Adrenal gland (tissue), 19 donors: ENCODE measurements at regions of chr17 and their contacts with region 1.

Region 1: DNA sequence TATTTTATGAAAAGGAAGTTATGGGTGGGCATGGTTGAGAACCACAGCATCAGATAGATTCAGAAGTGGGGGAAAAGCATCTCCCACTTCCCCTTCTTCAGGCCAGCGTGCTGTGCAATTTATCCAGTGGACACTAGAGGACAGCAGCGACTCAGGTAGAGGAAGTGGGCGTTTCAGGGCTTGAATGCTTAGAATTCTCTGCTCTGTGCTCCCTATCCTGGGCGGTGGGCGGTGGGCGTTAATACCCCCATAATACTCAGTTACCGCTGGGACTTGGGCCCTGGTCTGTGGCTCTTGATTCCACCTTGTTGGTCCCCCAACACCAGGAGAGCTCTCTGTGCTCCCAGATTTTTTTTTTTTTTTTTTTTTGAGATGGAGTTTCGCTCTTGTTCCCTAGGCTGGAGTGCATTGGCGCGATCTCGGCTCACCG is 3.7 kb upstream of the LYZL6 start:
- DNase-seq: peak; percentile 33 to 67 (median 46)
- H3K4me3 ChIP-seq: peak overlapping the region in 1 of 4 donors; percentile 37
- H3K27ac ChIP-seq: no peak overlapping the region
- H3K4me1 ChIP-seq: no peaks in the 10 kb centered on the region
- H3K27me3 ChIP-seq: no peaks in the 10 kb centered on the region
- CTCF ChIP-seq: peak; percentile 52 to 81 (median 75)
- POLR2A ChIP-seq: no peak

Region 2: DNA sequence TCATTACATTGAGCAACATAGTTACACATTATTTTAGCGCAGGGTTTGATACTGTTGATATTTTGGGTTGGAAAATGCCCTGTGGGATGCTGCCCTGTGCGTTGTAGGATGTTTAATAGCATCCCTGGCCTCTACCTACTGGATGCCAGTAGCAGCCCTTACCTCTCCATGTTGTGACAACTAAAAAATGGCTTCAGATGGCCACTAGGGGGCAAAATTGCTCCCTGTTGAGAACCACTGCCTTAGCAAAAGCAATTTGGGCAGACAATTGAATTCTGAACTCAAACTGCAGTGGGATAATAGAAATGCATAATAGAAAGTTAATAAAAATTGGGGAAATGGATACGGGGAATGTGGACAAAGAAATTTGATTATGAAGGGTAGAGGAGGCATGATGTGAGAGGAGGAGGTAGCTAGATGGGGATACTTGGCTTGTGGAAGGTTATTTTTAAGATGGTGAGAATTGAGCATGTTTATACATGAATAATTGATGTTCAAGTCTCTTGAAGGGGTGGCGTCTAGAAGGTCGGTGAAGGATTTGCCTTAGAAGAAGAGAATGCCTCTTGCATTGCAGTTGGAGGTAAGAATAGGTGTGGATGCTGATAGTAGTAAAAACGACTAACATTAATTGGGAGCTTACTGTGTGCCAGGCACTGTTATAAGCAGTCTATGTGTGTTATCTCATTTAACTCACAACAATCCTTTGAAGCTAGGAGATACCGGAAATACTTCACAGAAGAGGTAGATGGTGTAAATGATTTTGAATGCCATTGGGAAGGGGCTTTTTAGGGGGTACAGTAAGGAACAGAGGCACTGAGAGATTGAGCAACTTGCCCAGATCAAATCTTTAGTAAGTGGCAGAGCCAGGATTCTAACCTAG is 97.5 kb before region 1 on chr17:
- intact Hi-C with region 1: loop called in 1 of 2 experiments (anchors 10 kb)
- DNase-seq: peak; percentile 43 to 82 (median 65)
- H3K4me3 ChIP-seq: no peak overlapping the region
- H3K27ac ChIP-seq: no peak overlapping the region
- H3K4me1 ChIP-seq: peaks cover 9 to 21% of the 10 kb centered on the region in 2 donors
- H3K27me3 ChIP-seq: no peaks in the 10 kb centered on the region
- CTCF ChIP-seq: peak; percentile 63 to 84 (median 70)
- POLR2A ChIP-seq: no peak